ENCODE measurements at regions of chr9 and their contacts with region 1.

Region 1: DNA sequence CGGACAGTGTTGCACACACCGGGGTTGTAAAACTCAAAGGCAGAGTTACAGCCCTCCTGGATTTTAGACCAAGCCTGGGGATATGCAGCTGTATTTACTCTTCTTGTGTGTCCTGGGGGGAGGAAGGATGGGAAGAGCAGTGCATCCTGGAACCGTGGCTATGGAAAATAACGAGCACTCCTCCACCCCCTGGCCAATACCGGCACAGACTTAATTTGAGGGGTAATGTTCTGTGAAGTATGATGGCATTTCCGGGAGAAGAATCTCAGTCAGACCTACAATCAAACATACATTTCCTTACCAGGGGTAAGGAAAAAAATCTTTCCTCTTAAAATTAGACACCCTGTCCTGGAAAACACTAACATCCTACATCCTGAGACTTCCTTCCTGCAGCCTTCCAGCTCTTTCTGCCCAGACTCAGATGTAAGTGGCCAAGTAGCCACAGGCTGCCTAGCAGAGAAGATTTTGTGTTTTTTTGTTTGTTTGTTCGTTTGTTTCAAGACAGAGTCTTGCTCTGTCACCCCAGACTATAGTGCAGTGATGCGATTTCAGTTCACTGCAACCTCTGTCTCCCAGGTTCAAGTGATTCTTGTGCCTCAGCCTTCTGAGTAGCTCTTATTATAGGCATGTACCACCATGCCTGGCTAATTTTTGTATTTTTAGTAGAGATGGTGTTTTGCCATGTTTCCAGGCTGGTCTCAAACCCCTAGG is 11.0 kb upstream of the ERMP1 start:
- DNase-seq: no peak
- ATAC-seq: peak; percentile 19 to 28
- H3K4me3 Mint-ChIP-seq: peak overlapping the region; percentile 63 to 83 (median 78)
- H3K27ac Mint-ChIP-seq: peak overlapping the region; percentile 62 to 92 (median 86)
- H3K4me1 Mint-ChIP-seq: peaks cover 37 to 65% (median 59%) of the 10 kb centered on the region in 4 donors
- H3K27me3 Mint-ChIP-seq: no peaks in the 10 kb centered on the region

Region 2: GRCh38 chr9:5786370-5787127 is 57.4 kb before region 1 on chr9:
- POLR2A ChIA-PET with region 1: no interaction called
- DNase-seq: no peak
- ATAC-seq: no peak
- H3K4me3 Mint-ChIP-seq: peak overlapping the region in 1 of 10 donors; percentile 10
- H3K27ac Mint-ChIP-seq: peak overlapping the region in 7 of 10 donors; percentile 7 to 53 (median 39)
- H3K4me1 Mint-ChIP-seq: peaks cover 16 to 26% (median 23%) of the 10 kb centered on the region in 4 donors
- H3K27me3 Mint-ChIP-seq: no peaks in the 10 kb centered on the region

Region 3: DNA sequence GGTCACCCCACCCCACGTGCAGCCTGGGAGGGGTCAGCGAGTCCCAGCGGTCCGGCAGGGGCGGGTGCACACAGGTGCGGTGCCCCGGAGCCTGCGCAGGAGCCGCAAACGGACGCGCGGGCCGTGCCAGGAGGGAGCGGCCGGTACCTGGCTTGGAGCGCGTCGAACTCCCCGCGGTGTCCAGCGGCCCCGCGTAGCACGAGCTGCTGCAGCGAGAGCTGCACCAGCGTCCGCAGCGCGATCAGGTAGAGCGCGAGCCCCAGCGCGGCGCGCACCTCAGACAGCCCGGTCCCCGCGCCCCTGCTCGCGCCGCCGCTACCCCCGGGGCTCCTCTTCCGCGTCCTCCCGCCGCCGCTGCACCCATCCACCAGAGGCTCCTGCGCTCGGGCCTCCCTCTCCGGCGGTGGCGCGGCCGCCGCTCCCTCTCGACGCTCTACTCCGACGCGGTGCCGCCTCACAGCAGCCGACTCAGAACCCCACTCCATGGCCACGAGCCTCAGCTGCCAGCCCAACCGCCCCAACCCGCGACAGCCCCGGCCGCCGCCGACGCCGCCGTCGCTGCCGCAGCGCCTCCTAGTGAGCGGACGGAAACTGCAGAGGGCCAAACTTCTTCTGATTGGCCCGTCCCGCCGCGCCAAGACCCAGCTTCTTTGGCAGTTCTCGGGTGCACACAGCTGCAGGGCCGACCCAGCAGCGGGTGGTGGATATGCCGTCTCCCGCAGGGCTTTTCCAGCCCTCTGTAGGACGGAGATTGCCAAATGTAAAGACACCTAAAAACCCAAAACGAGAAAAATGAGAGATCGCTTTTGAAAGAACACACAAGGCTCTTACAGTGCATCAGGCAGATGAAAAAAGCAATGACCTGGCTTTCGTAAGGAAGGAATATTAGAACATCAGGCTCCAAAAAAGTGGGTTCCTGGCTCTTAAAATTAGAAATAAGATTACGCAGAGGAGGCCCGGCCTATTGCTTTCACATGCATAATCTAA is 11.1 kb before region 1 on chr9 and contains the start of gene ERMP1:
- POLR2A ChIA-PET with region 1: interaction called, 53 read pairs
- DNase-seq: peak; percentile 78 to 92 (median 90)
- ATAC-seq: peak; percentile 88 to 90
- H3K4me3 Mint-ChIP-seq: peak within 1 kb of the TSS; percentile 89 to 99 (median 96)
- H3K27ac Mint-ChIP-seq: peak within 1 kb of the TSS; percentile 52 to 97 (median 93)
- H3K4me1 Mint-ChIP-seq: peaks cover 28 to 64% (median 61%) of the 10 kb centered on the region in 4 donors
- H3K27me3 Mint-ChIP-seq: no peaks in the 10 kb centered on the region
- polyA plus RNA-seq, gene ERMP1: 7.0 to 11.8 (median 10.8) TPM

Measured in naive thymus-derived CD8-positive, alpha-beta T cell (primary cell).